HAP-1 (cell line): ENCODE measurements at regions of chr6 and their contacts with region 1.

Region 1: GRCh38 chr6:148947621-148948444 is 201.0 kb downstream of the UST start:
- DNase-seq: peak; percentile 54 to 90
- H3K4me3 ChIP-seq: no peak overlapping the region
- H3K4me1 ChIP-seq: no peaks in the 10 kb centered on the region; the same call in 1 of the 2 replicates
- H3K27me3 ChIP-seq: no peaks in the 10 kb centered on the region

Region 2: GRCh38 chr6:148144917-148145521 is 802.8 kb before region 1 on chr6:
- in situ Hi-C with region 1: no loop called
- DNase-seq: peak; percentile 70 to 91
- H3K4me3 ChIP-seq: no peak overlapping the region
- H3K4me1 ChIP-seq: no peaks in the 10 kb centered on the region
- H3K27me3 ChIP-seq: no peaks in the 10 kb centered on the region

Region 3: DNA sequence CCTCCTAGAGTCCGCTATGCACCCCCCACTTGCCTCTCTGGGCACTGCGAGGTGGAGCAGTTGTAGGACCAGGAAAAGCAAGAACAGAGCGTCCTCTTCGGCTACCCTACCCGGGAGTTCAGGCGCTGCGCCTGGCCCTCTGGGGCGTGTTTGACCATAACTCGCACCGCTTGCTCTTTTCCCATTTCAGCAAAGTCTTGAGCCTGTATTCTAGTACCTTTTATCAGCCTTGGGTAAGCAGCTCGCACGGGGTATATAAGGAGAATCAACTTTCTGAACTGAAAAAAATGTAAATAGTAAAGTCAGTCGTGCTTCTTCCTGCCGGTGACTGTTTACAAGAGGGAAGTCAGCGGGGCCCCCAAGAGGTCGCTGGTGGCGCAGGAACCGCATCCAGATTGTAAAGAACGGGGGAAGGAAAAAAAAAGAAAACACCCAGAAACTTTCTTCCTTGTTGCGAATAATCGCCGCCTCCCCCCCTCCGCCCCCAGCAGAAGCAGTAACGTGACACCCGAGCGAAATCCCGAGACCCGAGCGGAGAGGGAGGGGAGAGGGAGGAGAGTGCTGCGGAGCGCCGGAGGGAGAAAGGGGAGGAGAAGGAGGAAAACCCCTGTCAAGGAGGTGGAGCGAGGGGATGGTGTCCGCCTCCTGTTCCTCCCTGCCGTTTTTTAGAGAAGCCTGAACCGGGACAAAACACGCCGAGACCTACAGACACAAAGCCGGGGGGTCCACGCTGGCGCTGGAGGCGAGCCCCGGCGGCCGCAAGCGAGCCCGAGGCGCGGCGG is 201.3 kb before region 1 on chr6 and contains the start of gene UST:
- in situ Hi-C with region 1: loop called (anchors 10 kb)
- DNase-seq: peak; percentile 95 to 97
- H3K4me3 ChIP-seq: peak within 1 kb of the TSS; percentile 87
- H3K4me1 ChIP-seq: peaks cover 17% of the 10 kb centered on the region; the same call in 1 of the 2 replicates
- H3K27me3 ChIP-seq: no peaks in the 10 kb centered on the region